ENCODE measurements at regions of chr5 and their contacts with region 1.

Region 1: DNA sequence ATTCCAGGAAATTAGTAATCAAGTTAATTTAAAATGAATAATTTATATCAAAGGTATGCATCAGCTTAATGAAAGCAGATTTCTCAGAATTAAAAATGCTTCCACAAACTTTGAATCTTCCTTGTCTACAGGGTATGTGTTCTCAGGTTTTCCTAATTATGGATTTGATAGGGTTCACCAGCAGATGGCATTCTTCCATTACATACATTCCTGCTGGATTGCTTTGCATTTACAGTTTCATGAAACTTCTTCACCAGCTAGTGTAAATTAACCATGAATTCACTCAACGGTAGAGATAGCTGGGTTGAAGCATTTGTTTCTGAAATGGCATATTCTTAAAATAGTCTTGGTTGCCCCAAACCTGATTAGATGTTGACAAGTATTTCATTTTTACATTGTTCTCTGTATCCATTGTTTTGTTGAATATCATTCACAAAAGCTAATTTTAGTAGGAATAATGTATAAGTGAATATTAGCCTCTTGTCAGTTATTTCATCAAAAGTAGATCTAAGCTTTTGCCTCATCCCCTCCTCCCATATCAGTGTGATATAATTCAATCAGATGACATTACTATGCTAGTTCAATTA is 68.7 kb upstream of the WDR41 start:
- DNase-seq: peak; percentile 1
- H3K4me3 ChIP-seq: no peak overlapping the region
- H3K27ac ChIP-seq: no peak overlapping the region
- H3K27me3 ChIP-seq: peaks cover 3% of the 10 kb centered on the region
- CTCF ChIP-seq: peak; percentile 67

Region 2: DNA sequence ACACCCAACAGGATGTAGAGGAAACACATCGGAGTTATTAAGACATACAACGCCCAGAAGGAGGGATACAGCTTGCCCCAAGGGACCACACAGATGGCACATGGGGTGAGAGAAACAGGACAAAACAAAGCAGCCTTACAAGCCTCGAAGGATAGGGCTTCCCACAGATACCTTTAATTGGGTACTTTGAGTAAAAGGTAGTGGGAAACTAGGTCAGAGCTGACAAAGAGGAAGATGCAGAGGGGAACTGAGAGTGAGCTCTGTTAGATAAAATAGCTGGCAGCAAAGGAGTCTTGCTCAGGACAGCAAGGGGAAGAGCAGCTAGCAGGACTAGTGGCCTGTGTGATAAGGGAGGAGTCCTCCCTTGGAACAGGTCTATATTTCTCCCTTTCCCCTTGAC is 29.6 kb after region 1 on chr5:
- CTCF ChIA-PET with region 1: no interaction called
- POLR2A ChIA-PET with region 1: no interaction called
- DNase-seq: no peak
- H3K4me3 ChIP-seq: no peak overlapping the region
- H3K27ac ChIP-seq: no peak overlapping the region
- H3K27me3 ChIP-seq: no peaks in the 10 kb centered on the region
- CTCF ChIP-seq: no peak

Region 3: GRCh38 chr5:78008356-78008967 is 447.7 kb after region 1 on chr5:
- CTCF ChIA-PET with region 1: interaction called, 17 read pairs
- POLR2A ChIA-PET with region 1: no interaction called
- DNase-seq: no peak
- H3K4me3 ChIP-seq: no peak overlapping the region
- H3K27ac ChIP-seq: no peak overlapping the region
- H3K27me3 ChIP-seq: no peaks in the 10 kb centered on the region
- CTCF ChIP-seq: peak; percentile 88